AG04449 (cell line): ENCODE measurements at regions of chr22 and their contacts with region 1.

Region 1: GRCh38 chr22:17785185-17786184 is 11.2 kb upstream of the BID start:
- DNase-seq: no peak
- H3K4me3 ChIP-seq: no peak overlapping the region
- CTCF ChIP-seq: peak; percentile 60

Region 2: DNA sequence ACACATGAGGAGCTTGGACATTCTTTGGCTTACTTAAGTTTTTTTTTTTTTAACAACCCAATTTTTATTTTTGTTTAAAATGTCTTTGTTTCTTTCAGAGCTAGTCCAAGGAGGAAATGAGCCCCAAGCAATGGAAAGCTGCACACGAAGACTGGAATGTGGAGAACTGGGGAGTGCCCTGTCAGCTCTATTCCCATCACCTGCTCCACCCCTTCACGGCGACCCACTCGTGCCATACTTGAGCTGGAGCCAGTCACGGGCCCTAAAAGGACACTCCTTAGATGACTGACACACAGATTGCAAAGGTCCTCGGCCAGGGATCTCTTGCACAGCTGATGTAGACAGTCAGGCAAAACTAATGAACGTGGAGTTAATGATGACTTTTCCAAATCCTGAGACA is 232.7 kb before region 1 on chr22:
- CTCF ChIA-PET with region 1: interaction called, 99 read pairs
- POLR2A ChIA-PET with region 1: no interaction called
- DNase-seq: no peak
- H3K4me3 ChIP-seq: no peak overlapping the region
- CTCF ChIP-seq: no peak

Region 3: GRCh38 chr22:17772958-17773605 is 12.4 kb before region 1 on chr22:
- CTCF ChIA-PET with region 1: interaction called, 13 read pairs
- POLR2A ChIA-PET with region 1: interaction called, 3 read pairs
- DNase-seq: no peak
- H3K4me3 ChIP-seq: peak overlapping the region; percentile 64
- CTCF ChIP-seq: no peak